PC-3 (cell line): ENCODE measurements at regions of chr3 and their contacts with region 1.

Region 1: DNA sequence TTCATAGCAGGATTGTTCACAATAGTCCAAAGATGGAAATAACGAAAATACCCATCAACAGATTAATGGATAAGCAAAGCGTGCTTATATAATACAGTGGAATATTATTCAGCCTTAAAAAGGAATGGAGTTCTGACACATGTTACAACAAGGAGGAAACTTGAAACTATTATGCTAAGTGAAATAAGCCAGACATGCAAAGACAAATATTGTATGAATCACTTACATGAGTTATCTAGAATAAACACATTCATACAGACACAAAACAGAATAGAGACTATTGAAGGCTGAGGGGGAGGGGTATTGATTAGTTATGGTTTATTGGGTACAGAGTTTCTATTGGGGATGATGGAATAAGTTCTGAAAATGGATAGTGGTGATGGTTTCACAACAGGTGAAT is 438.6 kb downstream of the CADM2 start:
- DNase-seq: peak; percentile 44
- ATAC-seq: peak; percentile 71
- H3K4me3 ChIP-seq: no peak overlapping the region
- H3K27ac ChIP-seq: no peak overlapping the region
- H3K4me1 ChIP-seq: 0 out of 2 replicates have a peak, but pooled peaks cover 4% of the 10 kb centered on the region
- H3K27me3 ChIP-seq: no peaks in the 10 kb centered on the region
- CTCF ChIP-seq: no peak

Region 2: DNA sequence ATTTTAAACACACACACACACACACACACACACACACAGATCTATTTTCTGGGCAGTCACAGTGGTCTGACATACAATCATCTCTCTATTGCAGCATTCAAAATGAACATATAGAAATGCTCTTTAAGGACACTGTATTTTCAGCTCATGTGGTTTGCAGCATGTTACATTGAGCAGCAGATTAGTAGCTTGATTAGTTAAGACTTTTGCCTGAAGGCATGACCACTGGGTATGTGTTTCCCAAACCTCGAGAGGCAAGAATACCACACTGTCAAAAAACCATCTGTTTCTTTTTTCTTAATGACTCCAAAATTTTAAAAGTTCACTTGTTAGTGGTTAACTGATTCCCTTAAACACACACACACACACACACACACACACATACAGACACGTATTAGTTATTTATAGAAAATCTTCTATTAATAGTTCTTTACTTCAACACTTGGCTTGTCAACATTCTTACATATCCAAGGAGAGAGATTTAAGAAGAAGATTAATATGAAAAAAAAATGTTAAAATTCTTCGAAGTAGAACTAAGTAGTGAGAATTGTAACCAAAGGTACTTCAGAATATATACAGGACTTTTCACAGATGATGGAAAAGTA is 79.6 kb after region 1 on chr3:
- CTCF ChIA-PET with region 1: no interaction called
- POLR2A ChIA-PET with region 1: no interaction called
- intact Hi-C with region 1: no loop called
- DNase-seq: no peak
- ATAC-seq: no peak
- H3K4me3 ChIP-seq: no peak overlapping the region
- H3K27ac ChIP-seq: no peak overlapping the region
- H3K4me1 ChIP-seq: peaks cover 10% of the 10 kb centered on the region
- H3K27me3 ChIP-seq: no peaks in the 10 kb centered on the region
- CTCF ChIP-seq: no peak

Region 3: GRCh38 chr3:85567071-85567676 is 169.7 kb after region 1 on chr3:
- CTCF ChIA-PET with region 1: no interaction called
- POLR2A ChIA-PET with region 1: no interaction called
- intact Hi-C with region 1: loop called (anchors 10 kb)
- DNase-seq: peak; percentile 71
- ATAC-seq: peak; percentile 62
- H3K4me3 ChIP-seq: no peak overlapping the region
- H3K27ac ChIP-seq: no peak overlapping the region
- H3K4me1 ChIP-seq: peaks cover 7% of the 10 kb centered on the region; the same call in 1 of the 2 replicates
- H3K27me3 ChIP-seq: no peaks in the 10 kb centered on the region
- CTCF ChIP-seq: peak; percentile 96